Breast epithelium (tissue), 4 donors: ENCODE measurements at regions of chr17 and their contacts with region 1.

Region 1: GRCh38 chr17:13550291-13550690 is 51.4 kb downstream of the HS3ST3A1 start:
- DNase-seq: no peak
- H3K4me3 ChIP-seq: no peak overlapping the region
- H3K27ac ChIP-seq: no peak overlapping the region
- H3K4me1 ChIP-seq: no peaks in the 10 kb centered on the region
- H3K27me3 ChIP-seq: no peaks in the 10 kb centered on the region
- CTCF ChIP-seq: no peak
- POLR2A ChIP-seq: no peak

Region 2: GRCh38 chr17:13031718-13032350 is 518.5 kb before region 1 on chr17:
- intact Hi-C with region 1: no loop called
- DNase-seq: no peak
- H3K4me3 ChIP-seq: no peak overlapping the region
- H3K27ac ChIP-seq: peak overlapping the region in 1 of 2 donors; percentile 35
- H3K4me1 ChIP-seq: no peaks in the 10 kb centered on the region
- H3K27me3 ChIP-seq: no peaks in the 10 kb centered on the region
- CTCF ChIP-seq: peak in 1 of 3 donors; percentile 54
- POLR2A ChIP-seq: no peak

Region 3: GRCh38 chr17:13503526-13503925 is 46.8 kb before region 1 on chr17:
- intact Hi-C with region 1: loop called (anchors 2 kb)
- DNase-seq: no peak
- H3K4me3 ChIP-seq: no peak overlapping the region
- H3K27ac ChIP-seq: no peak overlapping the region
- H3K4me1 ChIP-seq: no peaks in the 10 kb centered on the region
- H3K27me3 ChIP-seq: no peaks in the 10 kb centered on the region
- CTCF ChIP-seq: no peak
- POLR2A ChIP-seq: no peak

Region 4: DNA sequence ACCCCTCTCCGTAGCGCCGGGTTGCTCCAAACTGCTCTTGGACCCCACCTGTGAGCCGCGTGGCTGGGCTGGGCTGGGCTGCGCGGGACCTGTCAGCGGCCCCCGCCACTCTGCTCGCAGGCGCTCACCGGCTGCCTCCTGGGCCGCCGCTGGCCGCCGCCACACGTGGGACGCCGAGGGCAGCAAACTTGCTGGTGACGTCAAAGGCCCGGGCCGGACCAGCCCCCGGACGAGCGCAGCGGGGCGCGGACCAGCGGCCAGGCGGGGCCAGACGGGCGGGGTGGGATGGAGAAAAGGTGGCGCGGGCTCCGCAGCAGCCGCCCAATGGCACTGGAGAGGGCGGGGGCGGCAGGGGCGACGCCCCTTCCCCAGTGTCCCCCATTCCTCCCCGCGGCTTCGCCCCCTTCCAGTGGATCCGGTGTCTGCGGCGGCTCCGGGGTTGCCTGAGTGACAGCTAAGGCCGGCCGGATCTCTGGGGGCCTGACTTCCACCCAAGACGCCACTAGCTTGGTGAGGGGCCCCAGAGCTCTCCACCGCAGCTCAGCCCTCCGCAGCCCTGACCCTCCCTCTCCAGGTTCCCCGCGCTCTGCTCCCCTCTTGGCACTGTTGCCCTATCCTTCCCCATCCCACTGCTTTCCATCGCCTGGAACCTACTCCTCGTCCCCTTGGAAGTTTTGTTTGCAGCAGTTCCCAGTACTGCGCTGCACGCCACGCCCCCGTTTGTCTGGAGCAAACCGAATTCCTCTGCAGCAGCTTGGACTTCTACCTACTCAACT is 51.7 kb after region 1 on chr17 and contains the start of gene HS3ST3A1:
- intact Hi-C with region 1: no loop called
- DNase-seq: no peak
- H3K4me3 ChIP-seq: peak within 1 kb of the TSS; percentile 35 to 70 (median 55)
- H3K27ac ChIP-seq: no peak within 1 kb of the TSS
- H3K4me1 ChIP-seq: peaks cover 4 to 7% of the 10 kb centered on the region in 2 donors
- H3K27me3 ChIP-seq: peaks cover 3 to 40% of the 10 kb centered on the region in 2 donors
- CTCF ChIP-seq: no peak
- POLR2A ChIP-seq: no peak
- total RNA-seq, gene HS3ST3A1: 0.66 to 1.4 (median 1.0) TPM

Region 5: DNA sequence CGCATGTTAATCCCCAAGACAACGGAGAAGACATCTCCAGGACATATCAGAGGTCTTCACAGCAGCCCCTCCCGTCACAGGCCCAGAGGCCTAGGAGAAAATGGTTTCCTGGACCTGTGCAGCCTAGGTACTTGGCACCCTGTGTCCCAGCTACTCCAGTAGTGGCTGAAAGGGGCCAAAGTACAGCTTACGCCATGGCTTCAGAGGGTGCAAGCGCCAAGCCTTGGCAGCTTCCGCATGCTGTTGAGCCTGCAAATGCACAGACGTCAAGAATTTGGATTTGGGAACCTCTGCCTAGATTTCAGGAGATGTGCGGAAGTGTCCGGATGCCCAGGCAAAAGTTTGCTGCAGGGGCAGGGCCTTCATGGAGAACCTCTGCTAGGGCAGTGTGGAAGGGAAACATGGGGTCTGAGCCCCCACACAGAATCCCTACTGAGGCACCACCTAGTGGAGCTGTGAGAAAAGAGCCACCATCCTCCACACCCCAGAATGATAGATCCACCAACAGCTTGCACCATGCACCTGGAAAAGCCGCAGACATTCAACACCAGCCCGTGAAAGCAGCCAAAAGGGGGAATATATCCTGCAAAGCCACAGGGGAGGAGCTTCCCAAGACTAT is 359.7 kb after region 1 on chr17:
- intact Hi-C with region 1: loop called (anchors 5 kb)
- DNase-seq: no peak
- H3K4me3 ChIP-seq: no peak overlapping the region
- H3K27ac ChIP-seq: no peak overlapping the region
- H3K4me1 ChIP-seq: no peaks in the 10 kb centered on the region
- H3K27me3 ChIP-seq: no peaks in the 10 kb centered on the region
- CTCF ChIP-seq: no peak
- POLR2A ChIP-seq: no peak